Adrenal gland (tissue), 19 donors: ENCODE measurements at regions of chr7 and their contacts with region 1.

Region 1: DNA sequence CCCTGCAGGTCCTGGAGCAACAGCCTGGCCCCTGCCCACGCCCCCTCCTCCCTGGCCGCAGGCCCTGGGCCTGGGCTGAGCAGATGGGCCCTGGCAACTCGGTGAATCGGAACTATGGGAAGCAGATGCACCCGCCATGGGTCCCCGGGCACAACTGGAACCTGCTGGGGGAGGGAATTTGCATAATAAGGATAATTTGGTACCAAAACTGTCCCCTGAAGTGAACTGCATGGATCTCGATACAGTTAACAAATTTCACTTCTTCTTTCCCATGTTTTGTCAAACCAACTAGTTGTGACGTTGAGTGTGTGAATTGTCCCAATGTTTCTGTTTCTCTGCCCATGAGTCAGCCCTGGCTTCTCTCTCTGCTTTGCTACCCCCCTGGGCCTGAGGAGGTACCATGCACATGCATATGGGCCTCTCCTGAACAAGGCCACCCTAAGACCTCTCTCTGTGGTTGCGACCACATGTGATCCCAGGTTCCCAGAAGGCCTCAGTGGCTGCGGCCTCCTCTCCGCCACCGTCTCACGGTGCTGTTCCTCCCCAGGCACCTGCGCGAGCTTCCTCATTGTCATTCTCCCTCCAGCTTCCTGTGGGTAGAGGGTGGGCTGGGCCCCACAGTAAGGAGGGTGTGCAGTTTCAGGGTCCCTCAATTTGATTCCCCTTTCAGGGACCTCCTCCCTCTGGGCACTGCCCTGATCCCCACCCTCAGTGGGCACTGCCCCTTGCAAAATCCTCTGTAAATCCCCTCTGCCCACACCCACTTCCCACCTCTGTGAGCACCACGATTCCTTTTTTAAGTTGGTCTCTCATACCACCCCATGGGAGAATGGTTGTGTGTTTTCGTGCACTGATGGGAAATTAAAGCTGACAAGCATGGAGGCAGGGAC is 40.0 kb downstream of the FIGNL1 start:
- DNase-seq: no peak
- H3K4me3 ChIP-seq: no peak overlapping the region
- H3K27ac ChIP-seq: no peak overlapping the region
- H3K4me1 ChIP-seq: no peaks in the 10 kb centered on the region
- H3K27me3 ChIP-seq: no peaks in the 10 kb centered on the region
- CTCF ChIP-seq: no peak
- POLR2A ChIP-seq: no peak

Region 2: DNA sequence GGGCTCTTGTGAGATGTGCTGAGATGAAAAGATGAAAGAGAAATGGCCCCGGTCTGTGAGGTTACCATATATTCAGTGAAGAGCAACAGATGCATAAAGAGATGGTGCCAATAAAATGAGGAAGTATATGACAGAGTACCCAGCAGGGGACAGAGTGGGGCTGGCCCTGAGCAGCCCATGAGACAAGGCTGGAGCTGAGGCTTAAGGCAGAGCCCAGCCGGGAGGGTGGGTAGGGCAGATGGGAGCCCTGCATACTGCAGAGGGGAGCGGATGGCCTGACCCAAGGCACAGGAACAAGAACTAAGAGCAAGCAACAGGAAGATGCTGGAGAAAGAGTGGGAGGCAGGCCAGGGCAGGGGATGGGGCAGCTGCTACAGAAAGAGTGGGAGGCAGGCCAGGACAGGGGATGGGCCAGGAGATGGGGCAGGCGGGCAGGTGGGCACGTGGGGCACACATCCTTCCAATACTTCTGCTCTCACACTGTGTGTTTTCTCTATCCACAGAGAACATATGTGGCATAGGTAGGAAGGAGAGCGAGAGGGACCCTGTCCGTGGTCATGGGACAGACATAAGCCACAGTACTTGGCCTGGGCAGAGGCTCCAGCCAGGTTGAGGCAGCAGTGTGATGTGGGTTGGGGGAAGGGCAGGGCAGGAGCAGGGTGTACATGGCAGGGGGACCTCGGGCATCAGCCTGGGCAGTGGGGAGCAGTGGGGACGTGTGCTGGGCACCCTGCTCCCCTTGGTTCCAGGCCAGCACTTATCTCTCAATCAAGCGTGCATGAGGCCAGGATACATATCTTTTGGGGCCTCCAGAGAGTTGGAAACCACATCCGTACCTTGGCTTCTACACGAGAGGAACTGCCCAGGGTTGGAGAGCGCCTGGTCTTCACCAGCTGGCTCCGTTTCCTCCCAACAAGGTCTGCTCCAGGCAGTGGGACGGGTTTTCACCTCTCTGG is 197.2 kb before region 1 on chr7:
- intact Hi-C with region 1: loop called in 1 of 2 experiments (anchors 5 kb)
- DNase-seq: peak in 1 of 7 donors; percentile 43
- H3K4me3 ChIP-seq: no peak overlapping the region
- H3K27ac ChIP-seq: no peak overlapping the region
- H3K4me1 ChIP-seq: no peaks in the 10 kb centered on the region
- H3K27me3 ChIP-seq: no peaks in the 10 kb centered on the region
- CTCF ChIP-seq: no peak
- POLR2A ChIP-seq: no peak

Region 3: DNA sequence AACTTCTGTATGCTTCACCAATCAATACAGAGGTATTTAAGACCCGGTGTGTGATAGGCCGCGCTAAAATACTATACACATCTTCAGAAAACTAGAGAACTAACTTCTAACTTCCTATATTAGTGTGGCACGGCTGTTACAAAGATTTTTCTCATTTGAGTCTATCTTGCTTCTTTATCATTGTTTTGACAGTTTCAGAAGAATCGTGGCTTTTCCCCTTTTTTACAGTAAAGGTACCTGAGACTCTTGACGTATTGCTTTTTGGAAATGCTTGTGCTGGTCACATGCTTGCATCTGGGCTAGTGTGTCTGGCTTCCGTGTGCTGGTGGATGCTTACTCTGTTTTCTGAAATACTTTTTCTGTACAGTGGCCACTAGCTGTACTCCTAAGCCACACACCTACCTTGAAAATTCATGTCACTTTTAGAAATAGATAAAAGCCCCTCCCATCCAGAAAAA is 92.9 kb before region 1 on chr7:
- intact Hi-C with region 1: no loop called
- DNase-seq: no peak
- H3K4me3 ChIP-seq: no peak overlapping the region
- H3K27ac ChIP-seq: no peak overlapping the region
- H3K4me1 ChIP-seq: no peaks in the 10 kb centered on the region
- H3K27me3 ChIP-seq: no peaks in the 10 kb centered on the region
- CTCF ChIP-seq: no peak
- POLR2A ChIP-seq: no peak

Region 4: GRCh38 chr7:50544992-50545391 is 134.9 kb after region 1 on chr7:
- intact Hi-C with region 1: no loop called
- DNase-seq: no peak
- H3K4me3 ChIP-seq: no peak overlapping the region
- H3K27ac ChIP-seq: no peak overlapping the region
- H3K4me1 ChIP-seq: no peaks in the 10 kb centered on the region
- H3K27me3 ChIP-seq: no peaks in the 10 kb centered on the region
- CTCF ChIP-seq: no peak
- POLR2A ChIP-seq: no peak